PC-9 (cell line): ENCODE measurements at regions of chr6 and their contacts with region 1.

Region 1: GRCh38 chr6:75044846-75045245 is 161.0 kb downstream of the COL12A1 start:
- DNase-seq: no peak
- H3K4me3 ChIP-seq: no peak overlapping the region
- H3K27ac ChIP-seq: no peak overlapping the region
- H3K4me1 ChIP-seq: no peaks in the 10 kb centered on the region
- H3K27me3 ChIP-seq: no peaks in the 10 kb centered on the region
- CTCF ChIP-seq: no peak

Region 2: GRCh38 chr6:75337835-75338580 is 293.2 kb after region 1 on chr6:
- CTCF ChIA-PET with region 1: interaction called, 11 read pairs
- POLR2A ChIA-PET with region 1: no interaction called
- intact Hi-C with region 1: no loop called
- DNase-seq: no peak
- H3K4me3 ChIP-seq: no peak overlapping the region
- H3K27ac ChIP-seq: no peak overlapping the region
- H3K4me1 ChIP-seq: no peaks in the 10 kb centered on the region
- H3K27me3 ChIP-seq: no peaks in the 10 kb centered on the region
- CTCF ChIP-seq: no peak